ENCODE measurements at regions of chr19 and their contacts with region 1.

Region 1: DNA sequence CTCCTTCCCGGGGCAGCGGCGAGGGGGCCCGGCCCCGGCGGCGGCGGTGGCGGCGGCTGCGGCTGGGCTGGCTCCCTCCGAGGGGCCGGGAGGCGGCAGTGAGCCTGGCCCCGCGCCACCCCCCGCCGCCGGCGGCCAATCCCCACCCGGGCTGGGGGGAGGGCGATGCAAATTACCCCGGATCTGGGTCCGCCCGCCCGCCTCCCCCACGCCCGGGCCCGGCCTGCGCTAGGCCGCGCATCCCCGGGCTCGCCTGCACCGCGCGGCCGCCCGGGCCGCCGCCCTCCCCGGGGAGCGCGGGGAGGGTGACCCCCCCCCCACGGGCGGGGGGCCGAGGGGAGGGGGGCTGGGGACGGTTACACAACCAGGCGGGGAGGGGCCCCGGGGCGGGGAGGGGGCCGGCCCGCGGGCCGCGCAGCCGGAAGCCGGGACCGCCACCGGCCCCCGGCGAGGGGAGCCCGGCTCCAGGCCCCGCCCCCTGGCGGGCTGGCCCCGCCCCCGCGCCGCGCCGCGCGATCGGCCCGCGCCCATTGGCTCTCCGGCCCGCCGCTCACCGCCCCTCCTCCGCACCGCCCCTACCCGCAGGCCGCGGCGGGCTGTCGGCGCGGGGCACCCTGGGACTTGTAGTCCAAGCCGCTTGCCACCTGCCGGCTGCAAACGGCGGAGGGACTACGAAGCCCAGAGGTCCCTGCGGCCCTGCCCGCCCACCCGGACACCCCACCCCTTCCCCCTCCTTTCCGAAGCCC is 1.1 kb downstream of the ZBTB7A start:
- DNase-seq: peak; percentile 99
- ATAC-seq: peak; percentile 84
- H3K4me3 Mint-ChIP-seq: peak overlapping the region; percentile 71
- H3K27ac Mint-ChIP-seq: no peak overlapping the region
- H3K4me1 Mint-ChIP-seq: peaks cover 40% of the 10 kb centered on the region
- H3K27me3 Mint-ChIP-seq: no peaks in the 10 kb centered on the region

Region 2: GRCh38 chr19:3035542-3036118 is 1030.0 kb before region 1 on chr19:
- CTCF ChIA-PET with region 1: no interaction called
- POLR2A ChIA-PET with region 1: no interaction called
- intact Hi-C with region 1: loop called in 1 of 2 experiments (anchors 5 kb)
- DNase-seq: peak; percentile 97
- ATAC-seq: peak; percentile 94
- H3K4me3 Mint-ChIP-seq: peak overlapping the region; percentile 83
- H3K27ac Mint-ChIP-seq: peak overlapping the region; percentile 96
- H3K4me1 Mint-ChIP-seq: peaks cover 19% of the 10 kb centered on the region
- H3K27me3 Mint-ChIP-seq: no peaks in the 10 kb centered on the region

Region 3: GRCh38 chr19:3762501-3763459 is 302.8 kb before region 1 on chr19 and contains the start of gene MRPL54:
- CTCF ChIA-PET with region 1: no interaction called
- POLR2A ChIA-PET with region 1: no interaction called
- intact Hi-C with region 1: loop called in 1 of 2 experiments (anchors 1 kb)
- DNase-seq: peak; percentile 100
- ATAC-seq: peak; percentile 88
- H3K4me3 Mint-ChIP-seq: peak within 1 kb of the TSS; percentile 100
- H3K27ac Mint-ChIP-seq: peak within 1 kb of the TSS; percentile 99
- H3K4me1 Mint-ChIP-seq: peaks cover 39% of the 10 kb centered on the region
- H3K27me3 Mint-ChIP-seq: no peaks in the 10 kb centered on the region
- total RNA-seq, gene MRPL54: 54.8 to 63.9 TPM

Region 4: DNA sequence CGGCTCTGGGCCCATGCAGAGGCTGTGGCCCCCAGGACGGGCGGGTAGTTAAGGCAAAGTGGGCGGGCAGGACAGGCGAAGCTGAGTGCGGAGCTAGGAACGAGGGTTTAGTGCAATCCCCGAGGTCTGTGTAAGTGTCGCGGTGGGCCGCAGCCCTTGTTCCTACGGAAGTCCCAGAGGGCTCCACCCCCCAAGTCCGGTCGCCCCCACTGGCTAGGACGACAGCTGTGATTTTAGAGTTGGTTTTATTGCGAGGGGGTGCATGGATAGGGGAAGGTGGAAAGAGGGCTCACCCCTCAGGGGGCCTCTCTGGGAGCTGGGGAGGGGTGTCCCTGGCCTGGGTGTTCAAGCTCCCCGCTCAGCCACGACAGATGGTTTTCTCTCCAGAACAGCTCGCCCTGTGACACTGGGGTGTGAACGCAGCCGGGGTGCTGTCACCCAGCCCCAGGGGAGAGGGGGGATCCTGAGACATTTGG is 20.6 kb before region 1 on chr19:
- CTCF ChIA-PET with region 1: no interaction called
- POLR2A ChIA-PET with region 1: no interaction called
- intact Hi-C with region 1: no loop called
- DNase-seq: no peak
- ATAC-seq: no peak
- H3K4me3 Mint-ChIP-seq: no peak overlapping the region
- H3K27ac Mint-ChIP-seq: no peak overlapping the region
- H3K4me1 Mint-ChIP-seq: peaks cover 3% of the 10 kb centered on the region
- H3K27me3 Mint-ChIP-seq: no peaks in the 10 kb centered on the region

Region 5: DNA sequence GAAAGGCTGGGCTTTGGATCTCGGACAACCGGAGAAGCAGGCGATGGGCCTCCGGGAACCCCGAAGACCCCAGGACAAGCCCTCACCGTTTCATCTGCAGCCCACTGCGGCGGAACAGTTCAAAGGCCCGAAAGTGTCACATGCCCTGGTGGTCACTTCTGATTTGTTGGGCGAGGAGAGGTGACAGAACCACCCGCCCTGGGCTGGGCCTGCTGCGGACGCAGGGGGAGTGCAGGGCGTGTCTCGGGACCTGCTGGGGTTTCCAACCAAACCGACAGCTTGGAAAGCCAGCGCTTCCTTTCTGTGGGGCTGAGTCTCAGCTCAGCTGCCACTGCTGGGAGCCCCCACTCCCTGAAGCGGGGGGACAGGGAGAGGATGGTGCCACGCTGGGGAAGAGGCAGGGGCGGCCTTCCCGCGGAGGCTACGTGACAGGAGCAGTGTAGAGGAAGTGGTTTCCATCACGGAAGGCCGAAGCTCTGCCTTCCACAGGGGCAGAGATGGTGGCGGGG is 23.9 kb after region 1 on chr19:
- CTCF ChIA-PET with region 1: no interaction called
- POLR2A ChIA-PET with region 1: no interaction called
- intact Hi-C with region 1: loop called in 1 of 2 experiments (anchors 1 kb)
- DNase-seq: peak; percentile 78
- ATAC-seq: peak; percentile 80
- H3K4me3 Mint-ChIP-seq: peak overlapping the region; percentile 76
- H3K27ac Mint-ChIP-seq: peak overlapping the region; percentile 93
- H3K4me1 Mint-ChIP-seq: peaks cover 43% of the 10 kb centered on the region
- H3K27me3 Mint-ChIP-seq: no peaks in the 10 kb centered on the region

Region 6: GRCh38 chr19:4246767-4247593 is 181.4 kb after region 1 on chr19 and contains the start of gene YJU2:
- CTCF ChIA-PET with region 1: no interaction called
- POLR2A ChIA-PET with region 1: no interaction called
- intact Hi-C with region 1: loop called in 1 of 2 experiments (anchors 1 kb)
- DNase-seq: peak; percentile 100
- ATAC-seq: peak; percentile 97
- H3K4me3 Mint-ChIP-seq: peak within 1 kb of the TSS; percentile 84
- H3K27ac Mint-ChIP-seq: peak within 1 kb of the TSS; percentile 100
- H3K4me1 Mint-ChIP-seq: peaks cover 9% of the 10 kb centered on the region
- H3K27me3 Mint-ChIP-seq: no peaks in the 10 kb centered on the region
- total RNA-seq, gene YJU2: 29.8 to 34.8 TPM

Region 7: DNA sequence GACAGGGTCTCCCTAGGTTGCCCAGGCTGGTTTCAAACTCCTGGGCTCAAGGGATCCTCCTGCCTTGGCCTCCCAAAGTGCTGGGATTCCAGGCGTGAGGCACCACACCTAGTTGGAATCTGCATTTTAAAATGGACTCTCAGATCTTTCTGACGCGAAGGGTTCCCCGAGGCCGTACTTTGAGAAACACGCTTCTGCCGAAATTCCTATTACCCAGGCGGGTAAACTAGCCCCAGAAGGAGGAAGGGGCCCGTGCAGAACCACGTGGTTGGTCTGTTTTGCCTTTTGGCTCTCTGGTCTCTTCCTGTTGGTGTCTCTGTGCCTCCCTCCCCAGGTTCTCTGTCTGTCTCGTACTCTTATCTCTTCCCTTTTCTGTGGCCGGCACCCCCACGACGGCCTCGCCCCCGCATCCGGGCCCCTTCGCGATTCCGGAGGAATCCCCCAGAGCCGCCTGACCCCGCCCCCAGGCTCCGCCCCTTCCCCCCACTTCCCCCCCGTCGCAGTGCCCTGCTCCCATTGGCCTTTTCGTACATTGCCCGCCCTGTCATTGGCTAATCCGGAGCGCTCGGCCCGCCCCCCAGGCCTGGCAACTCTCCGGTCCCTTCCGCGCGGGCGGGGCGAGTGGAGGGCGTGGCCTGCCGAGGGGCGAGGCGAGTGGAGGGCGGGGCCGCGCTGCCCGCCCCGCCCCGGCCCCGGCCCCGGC is 573.4 kb after region 1 on chr19 and contains the start of gene TNFAIP8L1:
- CTCF ChIA-PET with region 1: no interaction called
- POLR2A ChIA-PET with region 1: no interaction called
- intact Hi-C with region 1: loop called in 1 of 2 experiments (anchors 1 kb)
- DNase-seq: peak; percentile 100
- ATAC-seq: peak; percentile 95
- H3K4me3 Mint-ChIP-seq: peak within 1 kb of the TSS; percentile 90
- H3K27ac Mint-ChIP-seq: peak within 1 kb of the TSS; percentile 97
- H3K4me1 Mint-ChIP-seq: peaks cover 26% of the 10 kb centered on the region
- H3K27me3 Mint-ChIP-seq: no peaks in the 10 kb centered on the region
- total RNA-seq, gene TNFAIP8L1: 14.1 to 15.4 TPM